Activated CD8-positive, alpha-beta memory T cell treated with anti-CD3 and anti-CD28 coated beads, Interleukin-2, amount 10 ng/mL, durations not matched to agents 7 days and 5 days (primary cell): ENCODE measurements at regions of chr4 and their contacts with region 1.

Region 1: GRCh38 chr4:80202190-80202711 is 4.9 kb downstream of the PRDM8 start:
- DNase-seq: peak; percentile 83
- ATAC-seq: peak; percentile 75
- H3K4me3 Mint-ChIP-seq: peak overlapping the region; percentile 72
- H3K27ac Mint-ChIP-seq: peak overlapping the region; percentile 75
- H3K4me1 Mint-ChIP-seq: peaks cover 23% of the 10 kb centered on the region
- H3K27me3 Mint-ChIP-seq: peaks cover 13% of the 10 kb centered on the region

Region 2: DNA sequence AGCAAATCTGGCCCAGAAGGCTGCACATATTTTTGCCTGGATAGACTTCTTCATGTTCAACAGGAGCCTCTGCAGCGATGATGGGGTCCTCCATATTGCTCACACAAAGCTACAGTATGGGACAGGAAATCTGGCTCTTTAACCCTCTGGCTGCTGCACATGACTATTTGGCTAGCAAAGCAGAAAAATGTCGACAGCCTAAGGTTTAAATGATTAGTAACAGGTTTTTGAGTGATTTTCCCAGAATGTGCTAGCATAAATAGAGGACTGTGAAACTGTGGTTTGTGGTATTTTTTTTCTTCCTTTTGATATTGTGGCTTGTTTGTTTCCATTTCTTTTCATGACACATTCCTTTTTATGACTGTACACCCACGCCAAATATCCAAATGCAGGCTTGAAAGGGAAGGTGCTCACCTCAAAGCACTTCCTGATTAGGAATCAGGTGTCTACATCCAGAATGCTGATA is 674.0 kb before region 1 on chr4:
- CTCF ChIA-PET with region 1: no interaction called
- DNase-seq: no peak
- ATAC-seq: no peak
- H3K4me3 Mint-ChIP-seq: no peak overlapping the region
- H3K27ac Mint-ChIP-seq: no peak overlapping the region
- H3K4me1 Mint-ChIP-seq: peaks cover 3% of the 10 kb centered on the region
- H3K27me3 Mint-ChIP-seq: no peaks in the 10 kb centered on the region

Region 3: GRCh38 chr4:79865201-79865597 is 337.1 kb before region 1 on chr4:
- CTCF ChIA-PET with region 1: no interaction called
- DNase-seq: no peak
- ATAC-seq: no peak
- H3K4me3 Mint-ChIP-seq: no peak overlapping the region
- H3K27ac Mint-ChIP-seq: no peak overlapping the region
- H3K4me1 Mint-ChIP-seq: no peaks in the 10 kb centered on the region
- H3K27me3 Mint-ChIP-seq: peaks cover 7% of the 10 kb centered on the region

Region 4: DNA sequence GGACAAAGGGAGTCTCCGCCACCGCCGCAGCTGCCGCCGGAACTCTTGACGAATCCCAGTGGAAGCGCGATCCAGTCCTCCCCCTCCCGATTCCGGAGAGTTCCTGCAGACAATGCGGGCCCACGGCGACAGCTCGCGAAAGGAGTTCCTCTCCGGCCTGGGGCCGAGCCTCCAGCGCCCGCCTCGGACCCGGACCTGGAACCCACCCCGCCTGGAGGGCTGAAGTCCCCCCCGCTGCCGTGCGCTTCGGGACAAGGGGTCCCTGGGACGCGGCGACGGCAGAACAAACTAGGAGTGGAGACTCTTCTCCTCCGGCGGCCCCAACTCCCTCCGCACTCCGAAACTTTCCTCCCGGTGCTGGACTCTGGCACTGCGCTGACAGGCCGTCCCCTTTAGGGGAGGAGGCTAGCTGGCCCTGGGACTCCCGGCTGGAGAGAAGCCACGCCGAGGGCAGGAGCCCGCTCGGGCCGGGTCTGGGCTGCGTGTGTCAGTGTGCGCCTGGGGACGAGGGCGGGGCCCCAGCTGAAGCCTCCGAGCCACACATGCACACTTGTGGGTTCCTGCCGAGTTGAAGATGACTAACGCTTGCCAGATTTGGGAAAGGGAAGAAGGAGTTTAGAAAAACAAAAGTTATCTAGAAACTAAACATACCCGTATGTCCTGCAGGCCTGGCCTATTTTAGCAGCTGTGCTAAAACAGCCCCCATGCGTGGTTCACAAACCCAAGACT is 129.3 kb before region 1 on chr4 and contains the start of gene ANTXR2:
- CTCF ChIA-PET with region 1: interaction called, 16 read pairs
- DNase-seq: peak; percentile 88
- ATAC-seq: peak; percentile 87
- H3K4me3 Mint-ChIP-seq: peak within 1 kb of the TSS; percentile 95
- H3K27ac Mint-ChIP-seq: peak within 1 kb of the TSS; percentile 89
- H3K4me1 Mint-ChIP-seq: peaks cover 72% of the 10 kb centered on the region
- H3K27me3 Mint-ChIP-seq: no peaks in the 10 kb centered on the region
- total RNA-seq, gene ANTXR2: 52.0 to 55.0 TPM

Region 5: GRCh38 chr4:80125252-80126177 is 76.7 kb before region 1 on chr4:
- CTCF ChIA-PET with region 1: interaction called, 44 read pairs
- DNase-seq: peak; percentile 67
- ATAC-seq: peak; percentile 83
- H3K4me3 Mint-ChIP-seq: peak overlapping the region; percentile 33
- H3K27ac Mint-ChIP-seq: peak overlapping the region; percentile 95
- H3K4me1 Mint-ChIP-seq: peaks cover 66% of the 10 kb centered on the region
- H3K27me3 Mint-ChIP-seq: no peaks in the 10 kb centered on the region

Region 6: GRCh38 chr4:80138551-80139538 is 63.4 kb before region 1 on chr4:
- CTCF ChIA-PET with region 1: interaction called, 13 read pairs
- DNase-seq: peak; percentile 88
- ATAC-seq: peak; percentile 95
- H3K4me3 Mint-ChIP-seq: peak overlapping the region; percentile 33
- H3K27ac Mint-ChIP-seq: peak overlapping the region; percentile 87
- H3K4me1 Mint-ChIP-seq: peaks cover 60% of the 10 kb centered on the region
- H3K27me3 Mint-ChIP-seq: no peaks in the 10 kb centered on the region

Region 7: GRCh38 chr4:80173401-80173800 is 28.9 kb before region 1 on chr4:
- CTCF ChIA-PET with region 1: interaction called, 11 read pairs
- DNase-seq: peak; percentile 83
- ATAC-seq: peak; percentile 90
- H3K4me3 Mint-ChIP-seq: peak overlapping the region; percentile 26
- H3K27ac Mint-ChIP-seq: peak overlapping the region; percentile 94
- H3K4me1 Mint-ChIP-seq: peaks cover 56% of the 10 kb centered on the region
- H3K27me3 Mint-ChIP-seq: no peaks in the 10 kb centered on the region

Region 8: DNA sequence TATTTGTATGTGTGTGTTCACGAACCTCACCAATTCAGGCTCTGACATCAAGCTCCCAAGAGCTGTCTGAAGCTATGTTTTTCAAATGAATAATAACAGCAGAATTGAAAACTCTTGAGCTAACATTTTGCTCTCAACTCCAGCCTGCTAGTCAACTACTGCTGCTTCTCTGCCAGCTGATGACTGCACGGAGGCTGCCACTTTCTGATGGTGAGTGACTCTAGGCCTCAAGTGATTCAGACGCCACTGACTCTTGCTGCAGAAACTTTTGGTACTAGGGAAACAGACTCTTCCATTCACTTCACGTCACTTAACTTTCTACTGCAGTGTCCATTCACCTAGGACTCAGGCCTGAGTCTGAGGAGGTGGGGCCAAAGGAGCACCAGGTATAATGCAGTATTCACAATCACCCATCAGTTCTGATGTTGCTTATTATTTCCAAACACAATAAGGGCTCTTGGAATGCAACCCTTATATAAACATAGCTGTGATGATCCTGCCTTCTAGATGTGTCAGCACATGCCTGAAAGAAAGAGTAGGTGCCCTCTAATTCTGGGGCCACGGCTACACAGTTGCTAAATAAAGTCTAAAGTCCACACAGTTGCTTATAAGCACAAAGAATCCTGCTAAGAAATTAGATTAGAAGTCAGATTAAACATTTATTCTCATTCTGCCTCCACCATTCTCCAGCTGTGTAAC is 11.0 kb after region 1 on chr4:
- CTCF ChIA-PET with region 1: interaction called, 15 read pairs
- DNase-seq: no peak
- ATAC-seq: no peak
- H3K4me3 Mint-ChIP-seq: no peak overlapping the region
- H3K27ac Mint-ChIP-seq: no peak overlapping the region
- H3K4me1 Mint-ChIP-seq: peaks cover 1% of the 10 kb centered on the region
- H3K27me3 Mint-ChIP-seq: peaks cover 30% of the 10 kb centered on the region

Region 9: GRCh38 chr4:80221161-80221560 is 18.9 kb after region 1 on chr4:
- CTCF ChIA-PET with region 1: interaction called, 10 read pairs
- DNase-seq: no peak
- ATAC-seq: no peak
- H3K4me3 Mint-ChIP-seq: no peak overlapping the region
- H3K27ac Mint-ChIP-seq: no peak overlapping the region
- H3K4me1 Mint-ChIP-seq: no peaks in the 10 kb centered on the region
- H3K27me3 Mint-ChIP-seq: peaks cover 51% of the 10 kb centered on the region

Region 10: DNA sequence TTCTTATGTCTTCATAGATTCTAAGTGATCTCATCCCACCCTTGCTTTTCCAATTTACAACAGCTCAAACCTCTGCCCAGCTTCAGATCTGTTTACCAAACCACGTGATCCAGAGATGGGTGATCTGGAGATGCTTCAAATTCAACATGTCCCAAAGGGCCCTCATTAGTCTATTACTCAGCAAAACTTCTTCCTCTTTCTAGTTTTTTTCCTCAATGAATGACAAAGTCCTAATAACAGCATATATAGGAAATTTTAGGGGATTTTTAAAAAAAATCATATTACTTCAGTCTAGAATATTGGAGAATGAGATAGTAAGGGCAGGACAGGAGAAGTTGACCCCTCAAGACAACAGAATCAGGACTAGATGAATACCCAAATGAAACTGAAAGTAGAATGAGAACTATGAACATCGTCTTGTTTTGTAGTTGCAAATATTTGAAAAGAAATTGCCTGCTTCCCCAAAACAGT is 260.4 kb after region 1 on chr4:
- CTCF ChIA-PET with region 1: no interaction called
- DNase-seq: no peak
- ATAC-seq: peak; percentile 66
- H3K4me3 Mint-ChIP-seq: peak overlapping the region; percentile 24
- H3K27ac Mint-ChIP-seq: peak overlapping the region; percentile 83
- H3K4me1 Mint-ChIP-seq: peaks cover 11% of the 10 kb centered on the region
- H3K27me3 Mint-ChIP-seq: no peaks in the 10 kb centered on the region